Endothelial cell of umbilical vein (primary cell): ENCODE measurements at regions of chr5 and their contacts with region 1.

Region 1: DNA sequence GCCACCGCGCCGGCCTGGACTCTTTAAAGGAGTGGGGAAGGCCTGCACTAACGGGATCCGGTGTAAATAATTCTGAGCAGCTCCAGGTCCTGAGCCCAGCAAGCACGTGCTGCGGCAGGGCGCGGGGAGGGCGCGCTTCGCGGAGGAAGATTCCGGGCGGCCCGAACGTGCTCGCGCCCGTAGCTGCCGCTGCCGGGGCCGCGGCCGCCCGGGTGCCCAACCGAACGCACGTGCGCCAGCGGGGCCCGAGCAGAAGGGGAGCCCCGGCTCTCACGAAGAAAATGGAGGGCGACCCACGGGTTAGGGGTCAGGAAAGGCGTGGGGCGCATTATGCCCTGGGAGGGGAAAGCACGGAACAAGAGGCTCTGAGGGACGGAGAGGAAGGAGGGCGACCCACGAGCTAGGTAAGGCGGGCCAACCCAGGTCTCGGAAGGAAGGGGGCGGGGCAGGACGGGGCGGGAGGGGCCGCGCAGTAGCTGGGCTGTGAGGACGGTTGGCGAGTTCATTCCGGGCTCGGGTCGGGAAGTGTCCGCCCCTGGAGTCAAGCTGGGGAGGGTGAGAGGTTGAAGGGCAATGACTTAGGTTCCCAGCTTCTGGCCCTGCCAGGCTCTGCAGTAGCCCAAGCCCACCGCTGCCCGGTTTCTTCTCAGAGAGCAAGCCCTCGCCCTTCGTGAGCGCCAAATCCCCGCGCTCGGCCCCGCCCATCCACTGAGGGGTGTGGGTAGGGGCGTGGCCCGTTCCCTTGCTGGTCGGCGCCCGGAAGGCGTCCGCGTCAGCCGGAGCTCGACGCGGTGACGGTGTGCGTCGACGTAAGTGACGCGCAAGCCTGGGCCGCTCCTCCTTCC is at the start of gene ZNF131:
- DNase-seq: peak; percentile 97
- H3K4me3 ChIP-seq: peak within 1 kb of the TSS; percentile 73 to 90 (median 79)
- H3K27ac ChIP-seq: peak within 1 kb of the TSS; percentile 81
- H3K4me1 ChIP-seq: peaks cover 17% of the 10 kb centered on the region
- H3K27me3 ChIP-seq: no peaks in the 10 kb centered on the region
- CTCF ChIP-seq: no peak
- POLR2A ChIP-seq: peak; percentile 94
- total RNA-seq, gene ZNF131: 30.1 and 31.2 TPM in 2 replicates

Region 2: DNA sequence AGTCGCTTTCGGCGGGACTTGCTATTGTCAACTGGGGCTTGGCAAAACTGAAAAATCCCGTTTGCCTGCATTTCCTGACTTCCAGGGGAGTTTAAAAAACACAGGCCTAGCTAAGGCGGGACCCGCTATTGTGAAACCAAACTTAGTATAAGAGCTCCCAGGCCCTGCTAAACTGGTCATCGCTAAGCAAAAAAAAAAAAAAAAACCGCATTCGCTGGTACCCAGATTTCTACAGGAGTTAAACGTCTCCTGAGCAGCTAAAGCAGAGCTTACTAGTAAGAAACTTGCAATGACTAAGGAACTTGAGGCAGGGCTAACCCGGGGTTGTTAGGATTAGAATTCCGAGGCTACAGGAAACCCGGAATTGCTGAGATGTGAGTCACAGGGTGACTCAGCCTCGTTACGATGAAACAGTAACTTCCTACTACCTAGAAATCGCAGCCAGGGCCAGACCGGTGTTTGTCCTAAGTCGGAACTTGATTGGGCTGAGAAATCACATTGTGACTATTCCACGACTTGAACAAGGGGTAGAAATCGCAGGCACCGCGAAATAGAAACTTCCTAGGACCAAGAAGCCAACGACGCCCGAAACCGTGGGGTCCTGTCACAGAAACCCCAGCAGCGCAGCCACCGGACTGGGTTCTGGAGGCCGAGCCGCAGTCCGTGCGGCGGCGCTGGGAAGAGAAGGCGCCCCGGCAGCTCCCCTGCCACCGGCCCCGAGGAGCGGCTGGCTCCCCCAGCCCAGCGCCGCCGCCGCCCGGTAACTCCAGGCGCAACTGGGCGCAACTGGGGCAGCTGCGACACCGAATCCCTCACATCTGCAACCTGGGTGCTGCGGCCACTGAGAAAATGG is 170.3 kb before region 1 on chr5:
- CTCF ChIA-PET with region 1: interaction called, 3 read pairs
- POLR2A ChIA-PET with region 1: interaction called, 4 read pairs
- dilution Hi-C with region 1: no loop called
- intact Hi-C with region 1: loop called (anchors 1 kb)
- DNase-seq: peak; percentile 98
- H3K4me3 ChIP-seq: peak overlapping the region; percentile 11 to 55 (median 49)
- H3K27ac ChIP-seq: peak overlapping the region; percentile 99
- H3K4me1 ChIP-seq: peaks cover 17% of the 10 kb centered on the region
- H3K27me3 ChIP-seq: no peaks in the 10 kb centered on the region
- CTCF ChIP-seq: no peak
- POLR2A ChIP-seq: peak; percentile 86

Region 3: DNA sequence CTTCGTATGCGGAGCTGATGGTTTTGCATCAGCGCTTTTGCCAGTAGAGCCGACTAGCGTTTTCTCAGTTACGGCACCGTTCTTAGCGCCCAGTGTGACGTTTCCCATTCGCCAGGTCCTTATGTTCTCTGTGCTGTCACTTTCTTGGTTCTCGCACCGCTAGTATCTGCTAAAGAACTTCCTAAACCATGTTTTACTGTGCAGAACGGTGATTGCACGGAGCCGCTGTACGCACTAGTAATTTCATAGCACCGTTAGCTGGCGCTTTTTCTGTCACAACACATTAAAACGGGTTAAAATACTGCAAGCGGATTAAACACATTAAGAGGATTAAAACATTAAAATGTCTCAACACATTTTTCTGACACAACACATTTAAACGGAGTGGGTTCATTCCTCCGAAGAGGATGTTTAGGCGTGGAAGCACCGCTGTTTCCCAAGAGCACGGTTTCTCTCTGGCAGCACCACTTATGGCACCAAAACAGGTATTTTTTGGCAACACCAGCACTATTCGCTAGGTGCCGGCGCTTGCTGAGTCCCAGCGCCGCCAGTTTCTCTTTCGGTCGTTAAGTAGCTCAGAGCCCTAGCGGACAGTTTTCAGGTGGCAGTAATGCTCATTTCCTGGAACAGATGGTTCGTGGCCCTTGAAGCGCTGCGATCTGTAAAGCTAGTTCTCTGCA is 101.2 kb before region 1 on chr5:
- CTCF ChIA-PET with region 1: interaction called, 4 read pairs
- POLR2A ChIA-PET with region 1: no interaction called
- dilution Hi-C with region 1: no loop called
- intact Hi-C with region 1: loop called (anchors 5 kb)
- DNase-seq: peak; percentile 87
- H3K4me3 ChIP-seq: peak overlapping the region; percentile 36 to 83 (median 65)
- H3K27ac ChIP-seq: peak overlapping the region; percentile 93
- H3K4me1 ChIP-seq: peaks cover 19% of the 10 kb centered on the region
- H3K27me3 ChIP-seq: no peaks in the 10 kb centered on the region
- CTCF ChIP-seq: peak; percentile 51 to 61
- POLR2A ChIP-seq: no peak

Region 4: DNA sequence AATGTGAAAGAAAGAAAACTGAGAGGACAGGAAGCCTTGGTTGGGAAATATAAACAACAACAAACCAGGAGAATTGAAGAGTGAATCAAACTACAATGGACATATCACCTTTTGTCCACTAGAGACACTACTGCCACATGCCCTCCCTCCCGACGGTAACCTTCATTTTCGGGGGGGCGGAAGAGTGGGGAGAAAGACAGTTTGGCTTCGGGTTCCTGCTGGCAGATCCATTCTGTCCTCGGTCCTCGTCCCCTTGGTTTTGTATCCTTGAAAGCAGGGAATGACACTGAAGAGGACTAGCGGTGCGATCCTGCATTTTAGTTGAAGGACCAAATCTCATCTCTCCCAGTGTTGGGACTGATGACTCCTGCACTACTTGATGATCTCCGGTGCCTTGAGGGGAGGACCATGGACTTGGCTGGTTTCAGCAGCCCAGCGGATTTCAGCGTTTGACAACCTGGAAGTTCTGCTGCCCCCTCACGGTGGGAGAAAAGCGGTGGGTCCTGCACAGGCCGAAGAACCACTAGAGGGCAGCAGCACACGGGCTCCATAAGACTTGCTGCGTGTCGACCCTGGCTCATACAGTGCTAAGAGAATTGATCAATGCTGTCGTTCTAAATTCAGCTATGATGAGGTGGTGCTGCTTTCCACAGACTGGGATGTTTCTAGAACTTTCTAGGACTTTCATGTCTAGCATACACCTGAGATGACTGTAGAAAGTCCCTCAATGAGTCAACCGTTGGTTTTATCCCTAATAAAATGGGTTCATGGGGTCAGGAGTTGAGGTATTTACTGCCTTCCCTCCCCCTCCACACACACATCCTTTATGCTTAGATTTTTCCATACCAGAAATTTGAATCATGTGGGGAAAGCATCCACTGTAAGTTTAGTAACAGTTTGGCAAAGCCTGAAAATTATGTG is 15.3 kb before region 1 on chr5:
- CTCF ChIA-PET with region 1: interaction called, 25 read pairs
- POLR2A ChIA-PET with region 1: interaction called, 3 read pairs
- dilution Hi-C with region 1: no loop called
- intact Hi-C with region 1: loop called (anchors 1 kb)
- DNase-seq: peak; percentile 98
- H3K4me3 ChIP-seq: peak overlapping the region in 2 of 3 experiments; percentile 20 to 29
- H3K27ac ChIP-seq: no peak overlapping the region
- H3K4me1 ChIP-seq: no peaks in the 10 kb centered on the region
- H3K27me3 ChIP-seq: no peaks in the 10 kb centered on the region
- CTCF ChIP-seq: peak; percentile 100
- POLR2A ChIP-seq: no peak

Region 5: DNA sequence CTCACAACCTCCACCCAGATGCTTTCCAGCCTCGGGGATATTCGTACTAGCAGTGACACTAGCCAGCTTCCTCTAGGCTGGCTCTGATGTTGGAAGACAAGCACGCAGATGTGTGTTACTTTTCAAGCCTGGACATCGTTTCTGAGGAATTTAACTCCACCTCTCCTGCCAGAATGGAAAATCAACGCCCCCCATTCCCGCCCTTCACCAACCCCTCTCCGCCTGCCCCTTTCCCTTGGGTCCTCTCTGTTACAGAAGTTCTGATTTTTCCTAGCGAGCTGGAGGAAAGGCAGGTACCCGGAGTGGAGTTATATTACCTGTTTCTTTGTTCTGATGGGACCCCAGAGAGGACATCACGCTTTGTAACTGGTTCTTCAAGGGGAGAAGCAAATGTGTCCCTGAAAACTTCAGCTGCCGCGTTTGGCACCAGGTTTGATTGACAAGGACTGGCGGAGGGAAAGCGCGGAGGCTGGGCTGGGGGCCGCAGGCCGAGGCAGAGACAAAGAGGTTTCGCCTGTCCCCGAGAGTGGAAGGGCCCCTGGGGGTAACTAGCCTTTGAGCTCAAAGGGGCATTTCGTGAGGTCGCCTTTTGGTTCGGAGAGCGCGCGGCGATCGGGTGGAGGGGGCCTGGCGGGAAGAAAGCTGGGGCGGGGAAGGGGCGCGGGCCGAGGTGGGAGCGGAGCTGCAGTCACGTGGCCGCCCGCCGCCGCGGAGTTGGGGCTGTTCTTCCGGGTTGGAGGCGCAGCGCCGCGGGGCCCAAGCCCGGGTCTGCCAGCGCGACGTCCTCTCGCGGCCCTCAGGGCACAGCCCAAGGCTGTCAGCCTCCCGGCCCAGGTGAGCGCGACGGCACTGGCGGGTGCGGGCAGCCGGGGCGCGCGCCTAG is 481.8 kb after region 1 on chr5 and contains the start of gene NNT:
- CTCF ChIA-PET with region 1: no interaction called
- POLR2A ChIA-PET with region 1: no interaction called
- dilution Hi-C with region 1: no loop called
- intact Hi-C with region 1: loop called (anchors 5 kb)
- DNase-seq: peak; percentile 70
- H3K4me3 ChIP-seq: peak within 1 kb of the TSS; percentile 53 to 86 (median 80)
- H3K27ac ChIP-seq: peak within 1 kb of the TSS; percentile 88
- H3K4me1 ChIP-seq: peaks cover 19% of the 10 kb centered on the region
- H3K27me3 ChIP-seq: no peaks in the 10 kb centered on the region
- CTCF ChIP-seq: no peak
- POLR2A ChIP-seq: no peak
- total RNA-seq, gene NNT: 75.6 and 82.5 TPM in 2 replicates